Activated CD4-positive, alpha-beta memory T cell treated with anti-CD3 and anti-CD28 coated beads for 36 hours (primary cell): ENCODE measurements at regions of chr11 and their contacts with region 1.

Region 1: GRCh38 chr11:86244522-86245368 is at the start of gene EED:
- DNase-seq: peak; percentile 96
- H3K4me3 Mint-ChIP-seq: no peak within 1 kb of the TSS
- H3K27ac Mint-ChIP-seq: no peak within 1 kb of the TSS
- H3K4me1 Mint-ChIP-seq: peaks cover 33% of the 10 kb centered on the region
- H3K27me3 Mint-ChIP-seq: no peaks in the 10 kb centered on the region
- total RNA-seq, gene EED: 170 TPM

Region 2: DNA sequence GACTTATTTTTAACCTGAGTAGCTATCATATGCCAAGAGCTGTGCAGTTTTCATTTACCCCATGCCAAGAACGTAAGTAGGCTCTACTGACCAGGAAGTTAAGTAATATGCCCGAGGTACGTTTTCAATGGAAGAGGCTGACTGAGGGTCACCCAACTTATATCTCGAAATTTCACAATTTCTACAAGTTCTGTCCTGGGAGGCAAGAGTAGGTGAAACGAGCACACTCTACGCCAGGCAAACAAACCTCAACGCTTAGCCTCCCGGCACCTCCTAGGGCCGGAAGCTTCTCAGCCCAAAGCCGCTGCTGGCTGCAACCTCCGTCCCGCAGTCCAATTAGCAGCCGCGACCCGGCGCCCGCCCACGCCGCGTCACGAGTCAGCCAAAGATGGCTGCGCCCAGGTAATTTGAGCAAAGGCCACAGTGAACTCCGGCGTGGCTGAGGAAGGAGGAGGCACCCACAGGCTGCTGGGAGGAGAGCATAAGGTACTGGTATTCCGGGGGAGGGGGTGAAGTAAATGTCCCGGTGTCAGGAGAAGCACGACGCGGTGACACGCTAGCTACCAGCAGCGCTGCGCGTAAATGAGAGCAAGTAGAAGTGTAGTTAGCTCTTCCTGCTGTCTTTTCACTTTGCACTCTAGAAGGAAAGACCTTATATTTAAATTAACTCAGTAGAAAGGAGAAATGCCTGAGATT is 597.0 kb before region 1 on chr11 and contains the start of gene TMEM126A:
- CTCF ChIA-PET with region 1: no interaction called
- POLR2A ChIA-PET with region 1: no interaction called
- intact Hi-C with region 1: loop called (anchors 1 kb)
- DNase-seq: peak; percentile 96
- H3K4me3 Mint-ChIP-seq: peak within 1 kb of the TSS; percentile 94
- H3K27ac Mint-ChIP-seq: peak within 1 kb of the TSS; percentile 86
- H3K4me1 Mint-ChIP-seq: peaks cover 26% of the 10 kb centered on the region
- H3K27me3 Mint-ChIP-seq: peaks cover 11% of the 10 kb centered on the region
- total RNA-seq, gene TMEM126A: 45.3 to 49.4 TPM

Region 3: DNA sequence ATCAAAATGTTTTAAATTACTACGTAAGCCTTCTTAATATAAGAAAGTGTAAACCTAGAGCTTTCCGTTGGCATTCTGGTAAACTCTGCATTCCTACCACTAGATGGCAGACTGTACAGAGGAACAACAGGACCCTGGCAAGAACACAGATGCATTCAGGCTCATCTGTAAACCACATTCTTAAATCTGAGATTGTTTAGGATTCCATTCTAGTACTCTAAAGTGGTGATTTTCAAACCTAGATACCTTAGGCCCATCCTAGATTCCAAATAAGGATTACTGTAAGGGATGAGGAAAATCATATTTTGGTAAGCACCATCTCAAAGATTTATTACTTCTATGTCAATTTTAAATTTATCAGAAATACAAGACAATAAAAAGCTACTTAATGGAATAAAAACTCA is 202.8 kb before region 1 on chr11:
- CTCF ChIA-PET with region 1: interaction called, 4 read pairs
- POLR2A ChIA-PET with region 1: interaction called, 5 read pairs
- intact Hi-C with region 1: loop called (anchors 1 kb)
- DNase-seq: peak; percentile 48
- H3K4me3 Mint-ChIP-seq: no peak overlapping the region
- H3K27ac Mint-ChIP-seq: peak overlapping the region; percentile 58
- H3K4me1 Mint-ChIP-seq: peaks cover 71% of the 10 kb centered on the region
- H3K27me3 Mint-ChIP-seq: no peaks in the 10 kb centered on the region

Region 4: GRCh38 chr11:86174101-86175046 is 70.4 kb before region 1 on chr11:
- CTCF ChIA-PET with region 1: no interaction called
- POLR2A ChIA-PET with region 1: interaction called, 4 read pairs
- intact Hi-C with region 1: loop called (anchors 1 kb)
- DNase-seq: peak; percentile 36
- H3K4me3 Mint-ChIP-seq: no peak overlapping the region
- H3K27ac Mint-ChIP-seq: no peak overlapping the region
- H3K4me1 Mint-ChIP-seq: peaks cover 28% of the 10 kb centered on the region
- H3K27me3 Mint-ChIP-seq: no peaks in the 10 kb centered on the region

Region 5: DNA sequence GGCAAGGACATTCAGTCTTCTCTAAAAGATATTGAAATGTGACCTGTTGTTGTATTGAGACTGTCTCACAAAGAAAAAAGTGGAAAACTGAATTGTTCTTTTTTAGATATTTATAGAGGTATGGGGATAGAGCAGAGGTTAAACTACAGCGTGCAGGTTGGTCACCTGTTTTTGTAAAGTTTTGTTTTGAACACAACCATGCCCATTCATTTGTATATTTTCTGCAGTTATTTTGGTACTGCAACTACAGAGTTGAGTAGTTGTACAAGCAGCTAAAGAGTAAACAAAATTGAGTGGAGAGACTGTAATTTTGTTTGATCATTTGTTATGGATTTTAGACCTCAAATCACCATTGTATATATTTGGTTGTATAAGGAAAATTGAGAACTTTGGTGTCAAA is 11.2 kb after region 1 on chr11:
- CTCF ChIA-PET with region 1: no interaction called
- POLR2A ChIA-PET with region 1: interaction called, 5 read pairs
- intact Hi-C with region 1: loop called (anchors 1 kb)
- DNase-seq: no peak
- H3K4me3 Mint-ChIP-seq: no peak overlapping the region
- H3K27ac Mint-ChIP-seq: peak overlapping the region; percentile 68
- H3K4me1 Mint-ChIP-seq: peaks cover 56% of the 10 kb centered on the region
- H3K27me3 Mint-ChIP-seq: no peaks in the 10 kb centered on the region